CD4-positive, alpha-beta memory T cell (primary cell): ENCODE measurements at regions of chr14 and their contacts with region 1.

Region 1: GRCh38 chr14:34982417-34983147 is at the start of gene SRP54:
- DNase-seq: peak; percentile 99 to 100 (median 100)
- H3K4me3 ChIP-seq: peak within 1 kb of the TSS; percentile 87 to 91
- H3K4me3 Mint-ChIP-seq: no peak within 1 kb of the TSS
- H3K27ac ChIP-seq: peak within 1 kb of the TSS; percentile 98
- H3K27ac Mint-ChIP-seq: no peak within 1 kb of the TSS
- H3K4me1 ChIP-seq: peaks cover 47% of the 10 kb centered on the region
- H3K4me1 Mint-ChIP-seq: peaks cover 11 to 23% (median 18%) of the 10 kb centered on the region in 4 donors
- H3K27me3 ChIP-seq: no peaks in the 10 kb centered on the region
- H3K27me3 Mint-ChIP-seq: no peaks in the 10 kb centered on the region
- total RNA-seq, gene SRP54: 59.8 to 62.7 TPM

Region 2: GRCh38 chr14:34714320-34715126 is 268.1 kb before region 1 on chr14 and contains the start of gene CFL2:
- CTCF ChIA-PET with region 1: no interaction called
- POLR2A ChIA-PET with region 1: interaction called, 4 read pairs
- intact Hi-C with region 1: loop called (anchors 1 kb)
- DNase-seq: peak; percentile 66 to 90 (median 74)
- H3K4me3 ChIP-seq: peak within 1 kb of the TSS; percentile 25 to 65
- H3K4me3 Mint-ChIP-seq: peak within 1 kb of the TSS; percentile 88 to 95 (median 93)
- H3K27ac ChIP-seq: peak within 1 kb of the TSS; percentile 83
- H3K27ac Mint-ChIP-seq: peak within 1 kb of the TSS; percentile 92 to 96 (median 94)
- H3K4me1 ChIP-seq: peaks cover 28% of the 10 kb centered on the region
- H3K4me1 Mint-ChIP-seq: peaks cover 15 to 27% (median 19%) of the 10 kb centered on the region in 4 donors
- H3K27me3 ChIP-seq: no peaks in the 10 kb centered on the region
- H3K27me3 Mint-ChIP-seq: no peaks in the 10 kb centered on the region
- total RNA-seq, gene CFL2: 12.3 to 12.6 TPM

Region 3: GRCh38 chr14:34875031-34875922 is 107.3 kb before region 1 on chr14 and contains the start of gene BAZ1A:
- CTCF ChIA-PET with region 1: interaction called, 16 read pairs
- POLR2A ChIA-PET with region 1: interaction called, 128 read pairs
- intact Hi-C with region 1: loop called (anchors 1 kb)
- DNase-seq: peak; percentile 53 to 67 (median 57)
- H3K4me3 ChIP-seq: peak within 1 kb of the TSS; percentile 64 to 98
- H3K4me3 Mint-ChIP-seq: peak within 1 kb of the TSS; percentile 95 to 100 (median 100)
- H3K27ac ChIP-seq: peak within 1 kb of the TSS; percentile 100
- H3K27ac Mint-ChIP-seq: peak within 1 kb of the TSS; percentile 98 to 100 (median 99)
- H3K4me1 ChIP-seq: peaks cover 38% of the 10 kb centered on the region
- H3K4me1 Mint-ChIP-seq: peaks cover 17 to 48% (median 33%) of the 10 kb centered on the region in 4 donors
- H3K27me3 ChIP-seq: no peaks in the 10 kb centered on the region
- H3K27me3 Mint-ChIP-seq: no peaks in the 10 kb centered on the region
- total RNA-seq, gene BAZ1A: 54.1 to 56.4 TPM

Region 4: DNA sequence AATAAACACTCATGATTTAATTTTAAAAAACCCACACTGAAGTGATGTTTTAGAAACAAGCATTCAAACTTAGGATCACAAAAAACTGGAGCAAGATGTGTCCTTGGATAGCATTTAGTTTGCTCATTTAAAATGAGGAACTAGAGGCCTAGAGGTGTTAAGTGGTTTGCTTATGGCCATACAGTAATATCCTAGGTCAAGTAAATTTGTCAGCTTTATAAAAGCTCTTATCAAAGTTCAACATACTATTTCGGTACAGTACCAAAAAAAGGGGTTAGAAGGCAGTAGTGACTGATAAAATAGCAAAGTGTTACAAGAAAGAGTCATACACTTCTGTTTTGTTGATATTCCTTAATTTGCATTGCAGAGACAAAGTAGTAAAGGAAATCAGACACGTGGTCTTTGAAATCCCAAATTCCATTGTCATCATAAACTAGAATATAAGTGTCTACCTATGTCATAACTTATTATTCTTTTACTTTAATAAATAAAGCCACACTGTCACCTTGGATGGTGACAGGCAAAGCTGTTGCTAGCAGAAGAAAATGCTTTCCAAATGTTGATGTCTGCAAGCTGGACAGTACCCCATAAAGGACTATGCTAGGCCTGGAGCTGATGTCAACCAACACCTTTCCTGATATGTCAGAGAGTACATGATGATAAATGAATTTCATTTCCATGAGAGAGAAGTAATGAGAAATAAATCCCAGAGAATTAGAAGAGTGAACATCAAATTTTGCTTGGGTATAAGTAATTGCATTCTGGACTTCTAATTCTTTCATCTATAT is 17.4 kb before region 1 on chr14:
- CTCF ChIA-PET with region 1: interaction called, 13 read pairs
- POLR2A ChIA-PET with region 1: interaction called, 6 read pairs
- intact Hi-C with region 1: no loop called
- DNase-seq: no peak
- H3K4me3 ChIP-seq: no peak overlapping the region
- H3K4me3 Mint-ChIP-seq: no peak overlapping the region
- H3K27ac ChIP-seq: no peak overlapping the region
- H3K27ac Mint-ChIP-seq: peak overlapping the region in 1 of 7 donors; percentile 42
- H3K4me1 ChIP-seq: no peaks in the 10 kb centered on the region
- H3K4me1 Mint-ChIP-seq: peaks cover 0 to 10% (median 3%) of the 10 kb centered on the region in 4 donors
- H3K27me3 ChIP-seq: no peaks in the 10 kb centered on the region
- H3K27me3 Mint-ChIP-seq: no peaks in the 10 kb centered on the region

Region 5: GRCh38 chr14:35046048-35046741 is 63.6 kb after region 1 on chr14 and contains the start of gene FAM177A1:
- CTCF ChIA-PET with region 1: interaction called, 5 read pairs
- POLR2A ChIA-PET with region 1: interaction called, 91 read pairs
- intact Hi-C with region 1: loop called (anchors 1 kb)
- DNase-seq: peak; percentile 98 to 100 (median 99)
- H3K4me3 ChIP-seq: peak within 1 kb of the TSS; percentile 76 to 92
- H3K4me3 Mint-ChIP-seq: peak within 1 kb of the TSS; percentile 87 to 100 (median 96)
- H3K27ac ChIP-seq: peak within 1 kb of the TSS; percentile 98
- H3K27ac Mint-ChIP-seq: peak within 1 kb of the TSS; percentile 95 to 100 (median 99)
- H3K4me1 ChIP-seq: peaks cover 24% of the 10 kb centered on the region
- H3K4me1 Mint-ChIP-seq: peaks cover 19 to 38% (median 30%) of the 10 kb centered on the region in 4 donors
- H3K27me3 ChIP-seq: no peaks in the 10 kb centered on the region
- H3K27me3 Mint-ChIP-seq: no peaks in the 10 kb centered on the region
- total RNA-seq, gene FAM177A1: 35.2 to 41.5 TPM

Region 6: DNA sequence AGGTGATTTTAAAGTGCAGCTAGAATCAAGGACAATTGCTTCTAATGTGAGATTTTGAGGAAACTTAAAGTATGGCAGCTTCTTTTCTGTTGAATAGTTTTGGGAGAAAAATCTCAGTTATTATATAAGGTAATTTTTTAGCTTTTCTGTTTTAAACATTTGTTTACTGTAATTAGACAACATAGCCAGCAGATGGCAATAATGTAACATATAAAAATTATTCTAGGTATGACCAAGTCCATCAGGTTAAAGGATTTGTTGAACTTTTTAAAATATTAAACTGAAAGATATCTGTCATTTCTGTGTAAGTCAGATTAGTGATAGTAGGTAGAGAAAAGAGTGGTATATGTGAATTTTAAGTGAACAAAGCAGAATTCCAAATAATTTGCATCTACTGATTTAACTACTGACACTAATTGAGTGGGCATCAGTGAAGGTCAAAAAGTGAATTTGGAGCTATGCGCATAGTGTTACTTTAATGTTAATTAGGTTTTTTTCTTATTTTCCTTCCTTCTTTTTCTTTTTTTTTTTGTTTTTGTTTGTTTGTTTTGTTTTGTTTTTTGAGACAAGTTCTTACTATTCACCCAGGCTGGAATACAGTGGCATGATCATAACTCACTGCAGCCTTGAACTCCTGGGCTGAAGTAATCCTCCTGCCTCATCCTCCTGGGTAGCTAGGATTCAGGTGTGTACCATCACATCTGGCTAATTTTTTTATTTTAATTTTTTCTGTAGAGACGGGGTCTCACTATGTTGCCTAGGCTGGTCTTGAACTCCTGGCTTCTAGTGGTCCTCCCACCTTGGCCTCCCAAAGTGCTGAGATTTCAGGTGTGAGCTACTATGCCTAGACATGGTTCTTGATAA is 158.4 kb after region 1 on chr14:
- CTCF ChIA-PET with region 1: no interaction called
- POLR2A ChIA-PET with region 1: no interaction called
- intact Hi-C with region 1: no loop called
- DNase-seq: peak in 4 of 5 donors; percentile 38 to 61 (median 53)
- H3K4me3 ChIP-seq: no peak overlapping the region
- H3K4me3 Mint-ChIP-seq: no peak overlapping the region
- H3K27ac ChIP-seq: no peak overlapping the region
- H3K27ac Mint-ChIP-seq: peak overlapping the region; percentile 14 to 92 (median 84)
- H3K4me1 ChIP-seq: peaks cover 10% of the 10 kb centered on the region
- H3K4me1 Mint-ChIP-seq: peaks cover 15 to 23% (median 19%) of the 10 kb centered on the region in 4 donors
- H3K27me3 ChIP-seq: no peaks in the 10 kb centered on the region
- H3K27me3 Mint-ChIP-seq: no peaks in the 10 kb centered on the region

Region 7: GRCh38 chr14:35292051-35292769 is 309.6 kb after region 1 on chr14 and contains the start of gene PSMA6:
- CTCF ChIA-PET with region 1: no interaction called
- POLR2A ChIA-PET with region 1: interaction called, 12 read pairs
- intact Hi-C with region 1: loop called (anchors 1 kb)
- DNase-seq: peak; percentile 98 to 100 (median 99)
- H3K4me3 ChIP-seq: peak within 1 kb of the TSS; percentile 77 to 91
- H3K4me3 Mint-ChIP-seq: peak within 1 kb of the TSS; percentile 93 to 99 (median 98)
- H3K27ac ChIP-seq: peak within 1 kb of the TSS; percentile 97
- H3K27ac Mint-ChIP-seq: peak within 1 kb of the TSS; percentile 96 to 99 (median 98)
- H3K4me1 ChIP-seq: peaks cover 48% of the 10 kb centered on the region
- H3K4me1 Mint-ChIP-seq: peaks cover 30 to 65% (median 43%) of the 10 kb centered on the region in 4 donors
- H3K27me3 ChIP-seq: no peaks in the 10 kb centered on the region
- H3K27me3 Mint-ChIP-seq: no peaks in the 10 kb centered on the region
- total RNA-seq, gene PSMA6: 84.6 to 86.2 TPM

Region 8: DNA sequence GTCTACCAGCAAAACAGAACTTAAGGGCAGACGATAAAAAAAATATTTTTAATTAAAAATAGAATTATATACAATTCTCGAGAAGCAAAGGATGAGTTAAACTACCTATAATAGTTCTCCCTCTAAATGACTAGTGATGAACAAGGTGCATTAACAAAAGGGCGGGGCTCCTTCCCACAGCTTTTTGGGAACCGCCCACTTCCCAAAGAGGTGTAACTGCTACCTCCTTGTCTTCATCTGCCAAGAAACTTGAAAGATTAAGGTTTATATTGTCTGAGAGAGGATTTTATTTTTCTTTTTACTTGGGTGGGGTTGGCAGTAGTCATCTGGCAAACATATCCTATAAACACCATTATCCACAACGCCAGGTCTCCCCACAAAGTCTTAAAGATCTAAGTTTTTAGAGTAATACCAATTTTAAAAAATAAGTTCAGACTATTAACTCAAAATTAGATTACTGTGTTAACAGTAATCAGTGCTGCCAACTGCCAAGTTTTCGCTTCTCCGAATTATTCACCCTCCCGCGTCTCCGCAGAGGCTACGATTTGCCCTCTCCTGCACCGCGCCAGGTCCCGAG is 825.6 kb after region 1 on chr14:
- CTCF ChIA-PET with region 1: no interaction called
- POLR2A ChIA-PET with region 1: no interaction called
- intact Hi-C with region 1: loop called (anchors 2 kb)
- DNase-seq: peak in 3 of 5 donors; percentile 4 to 57 (median 11)
- H3K4me3 ChIP-seq: peak overlapping the region; percentile 45 to 81
- H3K4me3 Mint-ChIP-seq: peak overlapping the region; percentile 94 to 99 (median 98)
- H3K27ac ChIP-seq: peak overlapping the region; percentile 84
- H3K27ac Mint-ChIP-seq: peak overlapping the region; percentile 89 to 99 (median 98)
- H3K4me1 ChIP-seq: peaks cover 23% of the 10 kb centered on the region
- H3K4me1 Mint-ChIP-seq: peaks cover 19 to 47% (median 34%) of the 10 kb centered on the region in 4 donors
- H3K27me3 ChIP-seq: no peaks in the 10 kb centered on the region
- H3K27me3 Mint-ChIP-seq: no peaks in the 10 kb centered on the region